Activated naive CD4-positive, alpha-beta T cell treated with anti-CD3 and anti-CD28 coated beads for 36 hours (primary cell): ENCODE measurements at regions of chr13 and their contacts with region 1.

Region 1: GRCh38 chr13:40789275-40790133 is at the start of gene SLC25A15:
- DNase-seq: peak; percentile 72
- H3K4me3 Mint-ChIP-seq: peak within 1 kb of the TSS; percentile 81
- H3K27ac Mint-ChIP-seq: peak within 1 kb of the TSS; percentile 79
- H3K4me1 Mint-ChIP-seq: peaks cover 34% of the 10 kb centered on the region
- H3K27me3 Mint-ChIP-seq: no peaks in the 10 kb centered on the region
- total RNA-seq, gene SLC25A15: 15.5 to 15.6 TPM

Region 2: GRCh38 chr13:40401911-40402776 is 387.4 kb before region 1 on chr13:
- CTCF ChIA-PET with region 1: no interaction called
- intact Hi-C with region 1: no loop called
- DNase-seq: peak; percentile 51
- H3K4me3 Mint-ChIP-seq: peak overlapping the region; percentile 11
- H3K27ac Mint-ChIP-seq: no peak overlapping the region
- H3K4me1 Mint-ChIP-seq: peaks cover 16% of the 10 kb centered on the region
- H3K27me3 Mint-ChIP-seq: no peaks in the 10 kb centered on the region

Region 3: DNA sequence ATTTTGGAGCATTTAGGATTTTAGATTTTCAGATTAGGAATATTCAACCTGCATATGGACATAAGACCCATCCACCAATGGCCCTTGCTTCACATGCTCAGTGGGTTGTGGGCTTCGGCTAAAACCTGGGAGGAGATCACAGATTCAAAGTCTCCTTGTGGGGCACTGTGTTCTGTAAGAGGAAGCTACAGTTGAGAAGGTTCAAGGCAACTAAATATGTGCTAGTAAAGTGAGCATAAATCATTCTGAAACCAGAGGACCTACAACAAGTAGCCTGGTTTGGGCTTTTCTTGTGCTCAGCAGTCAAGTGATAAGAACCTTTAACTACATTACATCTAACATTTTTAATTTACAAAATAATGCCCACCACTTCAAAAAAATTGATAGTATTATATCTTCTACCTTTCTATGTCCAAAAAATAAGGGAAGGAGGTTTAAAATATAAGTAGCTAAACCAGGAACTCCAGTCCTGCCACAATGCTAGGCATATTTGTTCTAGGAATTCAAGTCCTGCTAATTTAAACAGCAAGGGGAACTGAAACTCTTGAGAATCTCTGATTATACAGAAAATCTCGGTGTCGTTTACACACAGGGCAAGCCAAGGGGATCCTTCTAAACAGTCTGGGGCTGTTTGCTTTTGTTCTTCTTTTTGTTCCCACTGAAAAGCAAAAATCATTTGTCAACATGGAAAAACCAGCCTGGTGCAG is 159.7 kb before region 1 on chr13:
- CTCF ChIA-PET with region 1: no interaction called
- intact Hi-C with region 1: no loop called
- DNase-seq: no peak
- H3K4me3 Mint-ChIP-seq: no peak overlapping the region
- H3K27ac Mint-ChIP-seq: peak overlapping the region; percentile 73
- H3K4me1 Mint-ChIP-seq: peaks cover 84% of the 10 kb centered on the region
- H3K27me3 Mint-ChIP-seq: no peaks in the 10 kb centered on the region

Region 4: GRCh38 chr13:40770934-40771618 is 18.4 kb before region 1 on chr13 and contains the start of gene MRPS31:
- CTCF ChIA-PET with region 1: interaction called, 6 read pairs
- intact Hi-C with region 1: loop called (anchors 1 kb)
- DNase-seq: peak; percentile 95
- H3K4me3 Mint-ChIP-seq: peak within 1 kb of the TSS; percentile 98
- H3K27ac Mint-ChIP-seq: peak within 1 kb of the TSS; percentile 95
- H3K4me1 Mint-ChIP-seq: peaks cover 33% of the 10 kb centered on the region
- H3K27me3 Mint-ChIP-seq: no peaks in the 10 kb centered on the region
- total RNA-seq, gene MRPS31: 28.4 to 28.8 TPM